Activated CD4-positive, alpha-beta T cell treated with anti-CD3 and anti-CD28 coated beads for 36 hours (primary cell): ENCODE measurements at regions of chr9 and their contacts with region 1.

Region 1: GRCh38 chr9:35079426-35080341 is at the start of gene FANCG:
- DNase-seq: peak; percentile 93
- ATAC-seq: peak; percentile 94
- H3K4me3 Mint-ChIP-seq: peak within 1 kb of the TSS; percentile 81
- H3K27ac Mint-ChIP-seq: peak within 1 kb of the TSS; percentile 96
- H3K4me1 Mint-ChIP-seq: peaks cover 16% of the 10 kb centered on the region
- H3K27me3 Mint-ChIP-seq: no peaks in the 10 kb centered on the region
- total RNA-seq, gene FANCG: 92.8 to 93.4 TPM

Region 2: DNA sequence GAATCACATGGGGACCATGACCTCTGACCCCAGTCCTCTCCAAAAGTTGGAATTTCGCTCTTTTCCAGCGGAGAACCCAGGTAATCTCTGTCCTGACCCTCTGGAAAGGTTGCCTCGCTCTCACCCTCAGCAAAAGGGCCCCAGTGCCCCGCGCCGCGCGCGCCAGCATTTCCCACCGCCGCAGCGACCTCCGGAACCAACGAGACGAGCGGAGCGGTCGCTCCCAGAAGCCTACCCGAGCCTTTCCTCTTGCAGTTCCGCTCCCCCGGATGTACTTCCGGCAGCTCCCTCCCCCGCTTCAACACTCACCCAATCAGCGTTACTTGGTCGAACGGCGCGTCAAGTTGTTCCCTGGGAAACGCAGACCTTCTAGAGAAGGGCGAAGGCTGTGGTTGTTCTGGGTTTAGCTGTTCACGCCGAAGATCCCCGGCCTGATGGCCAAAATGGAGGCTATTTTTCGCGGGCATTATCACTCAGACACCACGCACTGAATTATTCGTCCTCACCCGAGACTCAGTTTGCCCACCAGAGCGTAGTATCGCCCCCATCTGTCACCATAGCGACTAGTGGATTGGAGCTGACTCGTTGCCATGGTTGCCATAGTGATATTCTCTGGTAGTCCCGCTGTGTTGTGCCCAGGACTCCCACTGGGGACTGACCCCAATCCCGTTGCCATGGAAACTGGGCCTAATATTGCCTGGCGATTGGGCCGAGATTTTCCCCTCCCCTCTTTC is 23.4 kb after region 1 on chr9 and contains the start of gene STOML2:
- CTCF ChIA-PET with region 1: interaction called, 54 read pairs
- POLR2A ChIA-PET with region 1: interaction called, 10 read pairs
- intact Hi-C with region 1: loop called in 1 of 2 experiments (anchors 1 kb)
- DNase-seq: peak; percentile 95
- ATAC-seq: peak; percentile 99
- H3K4me3 Mint-ChIP-seq: peak within 1 kb of the TSS; percentile 98
- H3K27ac Mint-ChIP-seq: peak within 1 kb of the TSS; percentile 98
- H3K4me1 Mint-ChIP-seq: peaks cover 25% of the 10 kb centered on the region
- H3K27me3 Mint-ChIP-seq: no peaks in the 10 kb centered on the region
- total RNA-seq, gene STOML2: 169 to 201 TPM

Region 3: GRCh38 chr9:35164711-35165110 is 85.0 kb after region 1 on chr9:
- CTCF ChIA-PET with region 1: no interaction called
- POLR2A ChIA-PET with region 1: no interaction called
- intact Hi-C with region 1: no loop called
- DNase-seq: no peak
- ATAC-seq: no peak
- H3K4me3 Mint-ChIP-seq: no peak overlapping the region
- H3K27ac Mint-ChIP-seq: no peak overlapping the region
- H3K4me1 Mint-ChIP-seq: peaks cover 10% of the 10 kb centered on the region
- H3K27me3 Mint-ChIP-seq: no peaks in the 10 kb centered on the region

Region 4: GRCh38 chr9:35193762-35194161 is 114.1 kb after region 1 on chr9:
- CTCF ChIA-PET with region 1: no interaction called
- POLR2A ChIA-PET with region 1: no interaction called
- intact Hi-C with region 1: no loop called
- DNase-seq: no peak
- ATAC-seq: no peak
- H3K4me3 Mint-ChIP-seq: no peak overlapping the region
- H3K27ac Mint-ChIP-seq: no peak overlapping the region
- H3K4me1 Mint-ChIP-seq: no peaks in the 10 kb centered on the region
- H3K27me3 Mint-ChIP-seq: peaks cover 2% of the 10 kb centered on the region

Region 5: DNA sequence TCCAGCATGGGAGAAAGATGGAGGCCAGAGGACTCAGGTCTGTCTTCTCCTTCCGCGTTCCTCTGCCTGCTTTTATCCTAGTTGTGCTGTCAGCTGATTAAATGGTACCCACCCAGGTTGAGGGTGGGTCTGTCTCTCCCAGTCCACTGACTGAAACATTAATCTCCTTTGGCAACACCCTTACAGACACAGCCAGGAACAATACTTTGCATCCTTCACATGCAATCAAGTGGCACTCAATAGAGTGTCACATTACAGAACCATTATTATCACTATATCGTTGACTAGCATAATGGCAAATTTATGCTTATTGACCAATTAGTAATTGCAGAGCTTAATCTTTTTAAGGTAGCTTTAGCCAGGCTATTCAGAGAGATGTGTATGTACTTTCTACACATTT is 147.0 kb after region 1 on chr9:
- CTCF ChIA-PET with region 1: no interaction called
- POLR2A ChIA-PET with region 1: no interaction called
- intact Hi-C with region 1: no loop called
- DNase-seq: no peak
- ATAC-seq: no peak
- H3K4me3 Mint-ChIP-seq: no peak overlapping the region
- H3K27ac Mint-ChIP-seq: no peak overlapping the region
- H3K4me1 Mint-ChIP-seq: no peaks in the 10 kb centered on the region
- H3K27me3 Mint-ChIP-seq: peaks cover 6% of the 10 kb centered on the region

Region 6: DNA sequence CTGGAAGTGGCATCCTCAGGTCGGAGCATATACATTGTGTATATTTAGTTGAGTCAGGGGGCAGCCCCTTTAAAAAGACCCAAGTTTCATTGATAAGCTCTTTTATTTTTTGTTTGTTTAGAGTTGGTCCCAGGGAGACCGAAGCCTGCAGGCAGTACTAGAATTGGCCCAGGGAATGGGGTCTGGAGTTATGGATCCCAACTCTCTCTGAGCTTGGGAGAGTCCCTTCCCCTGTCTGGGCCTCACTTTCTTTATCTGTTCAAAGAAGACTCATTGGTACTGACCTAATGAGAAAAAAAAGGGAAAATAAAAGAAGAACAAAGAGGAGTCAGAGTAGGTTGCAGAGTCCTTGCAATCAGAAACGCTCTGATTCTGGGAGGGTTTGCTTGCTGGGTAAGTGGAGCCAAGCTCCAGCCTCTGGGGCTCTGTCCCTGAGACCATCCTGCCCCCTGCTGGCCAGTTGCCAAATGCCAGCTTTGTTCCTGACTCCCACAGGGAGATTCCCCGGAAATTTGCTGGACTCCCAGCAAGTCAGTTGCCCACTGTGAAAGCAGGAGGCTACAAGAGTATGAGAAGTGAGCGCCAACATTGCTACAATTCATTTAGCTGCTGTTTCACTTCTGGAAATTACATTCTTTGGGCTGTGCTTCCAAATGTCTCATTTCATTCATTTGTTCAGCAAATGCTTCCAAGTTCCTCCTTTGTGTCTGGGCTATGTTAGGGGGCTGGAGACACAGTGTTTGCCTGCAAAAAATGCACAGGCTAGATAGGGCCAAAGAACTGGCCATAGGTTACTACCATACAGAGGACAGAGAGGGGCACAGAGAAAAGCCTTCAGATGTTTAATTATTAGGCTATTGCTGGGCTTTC is 1649.2 kb after region 1 on chr9:
- CTCF ChIA-PET with region 1: no interaction called
- POLR2A ChIA-PET with region 1: no interaction called
- intact Hi-C with region 1: no loop called
- DNase-seq: peak; percentile 86
- ATAC-seq: peak; percentile 69
- H3K4me3 Mint-ChIP-seq: no peak overlapping the region
- H3K27ac Mint-ChIP-seq: no peak overlapping the region
- H3K4me1 Mint-ChIP-seq: no peaks in the 10 kb centered on the region
- H3K27me3 Mint-ChIP-seq: no peaks in the 10 kb centered on the region